Prostate gland (tissue), 2 donors: ENCODE measurements at regions of chr1 and their contacts with region 1.

Region 1: DNA sequence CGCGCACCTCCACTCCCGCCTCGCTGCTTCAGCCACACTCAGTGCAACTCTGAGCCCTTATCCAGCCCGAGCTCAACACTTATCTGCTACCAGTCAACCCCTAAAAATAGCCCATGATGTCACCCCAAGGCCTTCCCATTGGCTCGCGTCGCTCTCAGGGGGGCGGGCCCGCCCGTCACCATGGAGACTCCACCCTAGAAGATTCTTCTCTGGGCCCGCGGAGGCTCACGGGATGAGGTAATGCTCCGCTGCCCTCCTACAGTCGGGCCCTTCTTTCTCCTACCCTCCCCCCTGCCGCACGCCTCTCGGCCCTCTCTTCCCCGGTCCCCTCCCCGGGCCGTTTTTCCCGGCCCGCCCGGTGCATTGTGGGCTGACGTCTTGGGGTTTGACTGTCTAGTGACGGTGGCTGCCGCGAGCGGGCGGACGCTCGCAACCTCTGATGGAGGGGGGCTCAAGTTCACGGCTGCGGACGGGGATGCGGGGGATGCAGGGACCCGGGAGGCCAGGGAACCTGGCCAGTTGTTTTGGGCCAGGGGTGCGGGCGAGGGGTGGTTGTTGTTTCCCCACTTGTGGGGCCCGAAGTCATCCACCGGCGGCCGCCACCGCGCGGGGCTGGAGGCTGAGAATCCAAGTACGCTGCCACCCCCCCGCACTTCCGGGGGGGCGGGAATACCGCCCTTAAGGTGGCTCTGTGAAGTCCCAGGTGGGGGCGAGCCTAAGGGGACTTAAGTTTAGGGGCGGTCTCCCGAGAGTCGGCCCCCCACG is at the start of gene JUN:
- DNase-seq: peak; percentile 100
- H3K4me3 ChIP-seq: peak within 1 kb of the TSS; percentile 77 to 91
- H3K27ac ChIP-seq: peak within 1 kb of the TSS; percentile 99 to 100
- H3K4me1 ChIP-seq: no peaks in the 10 kb centered on the region
- H3K27me3 ChIP-seq: no peaks in the 10 kb centered on the region
- CTCF ChIP-seq: peak in 3 of 4 experiments; percentile 36 to 50 (median 43)
- POLR2A ChIP-seq: peak; percentile 99
- total RNA-seq, gene JUN: 154 to 303 TPM

Region 2: GRCh38 chr1:58324558-58324957 is 459.6 kb before region 1 on chr1:
- intact Hi-C with region 1: no loop called
- DNase-seq: no peak
- H3K4me3 ChIP-seq: no peak overlapping the region
- H3K27ac ChIP-seq: no peak overlapping the region
- H3K4me1 ChIP-seq: no peaks in the 10 kb centered on the region
- H3K27me3 ChIP-seq: no peaks in the 10 kb centered on the region
- CTCF ChIP-seq: no peak
- POLR2A ChIP-seq: no peak

Region 3: GRCh38 chr1:58664881-58665280 is 119.3 kb before region 1 on chr1:
- intact Hi-C with region 1: no loop called
- DNase-seq: no peak
- H3K4me3 ChIP-seq: no peak overlapping the region
- H3K27ac ChIP-seq: no peak overlapping the region
- H3K4me1 ChIP-seq: no peaks in the 10 kb centered on the region
- H3K27me3 ChIP-seq: no peaks in the 10 kb centered on the region
- CTCF ChIP-seq: no peak
- POLR2A ChIP-seq: no peak

Region 4: DNA sequence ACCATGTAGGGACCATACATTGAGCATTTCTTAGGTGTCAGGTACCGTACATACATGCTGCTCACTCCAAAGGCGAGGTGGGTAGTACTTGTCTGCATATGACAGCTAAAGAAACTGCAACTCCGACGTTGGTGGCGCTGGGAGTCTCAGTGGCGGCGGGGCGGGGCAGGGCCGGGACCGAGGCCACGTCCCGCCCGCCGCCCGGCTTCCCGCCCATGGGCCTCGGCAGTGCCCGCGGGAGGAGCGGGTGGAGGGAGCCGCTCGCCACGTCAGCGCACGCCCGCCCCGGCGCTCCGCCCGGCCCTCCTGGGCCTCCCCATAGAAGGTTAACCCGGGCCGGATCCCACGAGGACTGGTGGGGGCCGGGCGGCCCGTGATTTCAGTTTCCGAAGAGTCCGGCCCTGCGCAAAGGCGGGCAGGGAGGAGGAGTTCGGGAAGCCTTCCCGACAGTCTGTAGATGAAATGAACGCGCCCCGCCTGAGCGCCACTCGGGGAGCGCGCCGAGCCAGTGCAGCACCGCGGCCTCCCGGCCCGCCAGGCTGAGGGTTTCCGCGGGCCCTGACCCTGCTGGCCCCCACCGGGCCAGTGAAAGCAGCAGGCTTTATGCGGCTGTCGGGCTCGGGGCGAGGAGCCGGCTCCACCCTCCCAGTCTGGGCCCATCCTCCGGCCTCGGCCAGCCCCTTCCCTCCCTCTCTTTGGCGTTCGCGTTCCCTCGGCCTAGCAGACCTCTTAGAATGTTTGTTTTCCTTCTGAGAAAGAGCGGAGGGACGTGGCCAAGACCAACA is 119.5 kb after region 1 on chr1:
- intact Hi-C with region 1: loop called (anchors 2 kb)
- DNase-seq: peak; percentile 90
- H3K4me3 ChIP-seq: peak overlapping the region; percentile 38 to 49
- H3K27ac ChIP-seq: peak overlapping the region; percentile 94 to 97
- H3K4me1 ChIP-seq: no peaks in the 10 kb centered on the region
- H3K27me3 ChIP-seq: no peaks in the 10 kb centered on the region
- CTCF ChIP-seq: peak in 1 of 4 experiments; percentile 9
- POLR2A ChIP-seq: peak; percentile 87

Region 5: DNA sequence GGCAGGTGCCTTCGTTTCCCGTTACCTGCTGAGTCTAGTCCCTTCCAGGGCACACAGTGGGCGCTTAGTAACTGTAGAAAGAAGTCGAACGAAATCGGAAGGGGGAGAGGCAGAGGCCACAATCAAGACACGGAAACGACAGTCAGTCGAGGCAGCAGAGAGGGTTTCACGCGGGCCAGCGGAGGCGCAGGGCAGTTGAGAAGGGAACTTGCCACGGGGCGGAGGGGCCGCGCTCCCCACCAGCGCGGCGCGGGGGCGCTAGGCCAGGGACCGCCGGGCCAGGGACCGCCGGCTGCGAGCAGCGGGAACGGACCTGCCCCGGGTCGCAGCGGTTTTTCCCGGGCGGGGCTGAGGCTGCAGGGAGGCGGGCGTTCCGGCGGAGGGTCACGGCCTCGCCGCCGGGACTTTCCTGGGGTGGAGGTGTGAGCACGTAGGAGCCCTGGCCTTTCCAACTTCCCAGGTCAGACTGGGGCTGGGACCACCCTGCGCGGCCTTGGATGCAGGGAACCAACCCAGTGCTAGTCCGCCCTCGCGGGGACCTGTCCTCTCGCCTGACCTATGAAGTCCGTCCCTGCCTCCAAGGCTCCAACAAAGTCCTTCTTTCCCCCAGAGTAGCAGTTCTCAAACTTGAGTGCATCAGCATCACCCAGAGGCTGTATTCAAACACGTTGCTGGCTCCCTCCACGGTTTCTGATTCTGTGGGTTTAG is 362.6 kb after region 1 on chr1:
- intact Hi-C with region 1: loop called (anchors 2 kb)
- DNase-seq: no peak
- H3K4me3 ChIP-seq: peak overlapping the region; percentile 23 to 36
- H3K27ac ChIP-seq: peak overlapping the region; percentile 20 to 55
- H3K4me1 ChIP-seq: peaks cover 2% of the 10 kb centered on the region
- H3K27me3 ChIP-seq: no peaks in the 10 kb centered on the region
- CTCF ChIP-seq: no peak
- POLR2A ChIP-seq: peak; percentile 8

Region 6: DNA sequence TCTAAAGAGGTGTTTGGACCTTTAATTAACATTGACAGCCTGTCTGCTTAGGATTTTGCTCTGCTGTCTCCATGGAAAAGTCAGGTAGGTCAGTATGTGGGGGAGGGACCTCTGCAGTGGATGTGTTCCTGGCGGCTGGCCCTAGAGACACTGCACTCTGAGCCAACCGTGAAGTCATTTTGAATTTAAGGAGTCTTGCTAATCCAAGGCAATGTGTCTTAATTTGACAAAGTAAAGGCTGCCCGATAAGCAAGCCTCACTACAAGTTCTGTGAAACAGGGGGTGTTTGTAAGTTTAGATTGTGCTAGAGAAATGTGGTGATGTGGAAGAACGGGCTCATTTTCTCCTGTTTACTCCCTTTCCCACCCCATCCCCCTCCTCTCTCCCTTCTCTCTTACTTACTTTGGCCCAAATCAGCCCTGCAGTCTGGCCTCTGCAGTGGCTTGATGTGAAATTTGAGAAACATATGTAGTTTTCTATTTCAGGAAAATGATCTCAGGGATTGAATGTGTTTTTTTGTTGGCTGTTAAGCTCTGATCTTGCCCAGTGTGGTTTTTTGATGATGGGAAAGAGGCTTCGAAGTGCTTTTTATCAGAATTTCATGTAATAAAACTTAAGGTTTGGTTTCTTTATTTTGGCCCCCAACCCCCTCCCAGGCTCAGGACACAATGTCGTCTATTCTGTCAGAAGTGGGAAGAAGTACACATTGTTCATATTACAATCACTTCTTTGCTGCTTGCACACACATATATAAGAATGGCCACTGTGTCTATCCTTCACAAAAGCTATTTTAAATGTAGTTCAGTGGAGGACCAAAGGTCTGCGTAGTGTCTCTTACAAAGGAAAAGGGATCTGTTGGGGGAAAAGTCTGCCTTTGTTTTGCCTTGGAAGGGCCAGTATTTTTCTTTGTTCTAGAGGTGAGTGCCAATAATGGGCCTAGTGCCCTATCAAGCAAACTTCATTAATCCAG is 609.3 kb after region 1 on chr1:
- intact Hi-C with region 1: loop called (anchors 2 kb)
- DNase-seq: peak; percentile 64
- H3K4me3 ChIP-seq: no peak overlapping the region
- H3K27ac ChIP-seq: peak overlapping the region; percentile 77
- H3K4me1 ChIP-seq: no peaks in the 10 kb centered on the region
- H3K27me3 ChIP-seq: no peaks in the 10 kb centered on the region
- CTCF ChIP-seq: no peak
- POLR2A ChIP-seq: no peak

Region 7: DNA sequence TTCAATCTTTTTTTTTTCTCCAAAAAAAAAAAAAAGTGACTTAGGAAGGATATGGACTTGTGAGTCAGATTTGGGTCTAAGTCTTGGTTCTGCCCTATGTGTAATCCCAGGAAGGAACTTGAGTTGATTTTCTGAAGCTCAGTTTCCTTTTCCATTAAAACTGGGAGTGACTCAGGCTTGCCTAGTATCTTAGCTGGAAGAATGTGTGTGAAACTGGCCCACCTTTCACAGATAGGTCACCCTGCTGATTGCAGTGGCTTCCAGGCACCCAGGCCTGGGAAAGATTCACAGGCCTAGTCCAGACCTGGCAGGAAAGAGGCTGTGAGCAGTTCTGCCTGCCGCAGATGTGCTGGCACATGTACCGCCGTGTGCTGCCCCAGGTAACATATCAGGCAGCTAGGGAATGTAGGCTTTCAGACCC is 812.3 kb after region 1 on chr1:
- intact Hi-C with region 1: loop called (anchors 10 kb)
- DNase-seq: peak; percentile 27
- H3K4me3 ChIP-seq: no peak overlapping the region
- H3K27ac ChIP-seq: peak overlapping the region; percentile 66 to 71
- H3K4me1 ChIP-seq: peaks cover 22% of the 10 kb centered on the region
- H3K27me3 ChIP-seq: no peaks in the 10 kb centered on the region
- CTCF ChIP-seq: no peak
- POLR2A ChIP-seq: no peak

Region 8: GRCh38 chr1:59759156-59759925 is 975.2 kb after region 1 on chr1:
- intact Hi-C with region 1: loop called (anchors 2 kb)
- DNase-seq: peak; percentile 75
- H3K4me3 ChIP-seq: no peak overlapping the region
- H3K27ac ChIP-seq: peak overlapping the region; percentile 48 to 49
- H3K4me1 ChIP-seq: no peaks in the 10 kb centered on the region
- H3K27me3 ChIP-seq: no peaks in the 10 kb centered on the region
- CTCF ChIP-seq: peak; percentile 56 to 97 (median 94)
- POLR2A ChIP-seq: no peak